ENCODE measurements at regions of chr11 and their contacts with region 1.

Region 1: GRCh38 chr11:119121008-119121810 is at the start of gene HINFP:
- DNase-seq: peak; percentile 99 to 100 (median 100)

Region 2: DNA sequence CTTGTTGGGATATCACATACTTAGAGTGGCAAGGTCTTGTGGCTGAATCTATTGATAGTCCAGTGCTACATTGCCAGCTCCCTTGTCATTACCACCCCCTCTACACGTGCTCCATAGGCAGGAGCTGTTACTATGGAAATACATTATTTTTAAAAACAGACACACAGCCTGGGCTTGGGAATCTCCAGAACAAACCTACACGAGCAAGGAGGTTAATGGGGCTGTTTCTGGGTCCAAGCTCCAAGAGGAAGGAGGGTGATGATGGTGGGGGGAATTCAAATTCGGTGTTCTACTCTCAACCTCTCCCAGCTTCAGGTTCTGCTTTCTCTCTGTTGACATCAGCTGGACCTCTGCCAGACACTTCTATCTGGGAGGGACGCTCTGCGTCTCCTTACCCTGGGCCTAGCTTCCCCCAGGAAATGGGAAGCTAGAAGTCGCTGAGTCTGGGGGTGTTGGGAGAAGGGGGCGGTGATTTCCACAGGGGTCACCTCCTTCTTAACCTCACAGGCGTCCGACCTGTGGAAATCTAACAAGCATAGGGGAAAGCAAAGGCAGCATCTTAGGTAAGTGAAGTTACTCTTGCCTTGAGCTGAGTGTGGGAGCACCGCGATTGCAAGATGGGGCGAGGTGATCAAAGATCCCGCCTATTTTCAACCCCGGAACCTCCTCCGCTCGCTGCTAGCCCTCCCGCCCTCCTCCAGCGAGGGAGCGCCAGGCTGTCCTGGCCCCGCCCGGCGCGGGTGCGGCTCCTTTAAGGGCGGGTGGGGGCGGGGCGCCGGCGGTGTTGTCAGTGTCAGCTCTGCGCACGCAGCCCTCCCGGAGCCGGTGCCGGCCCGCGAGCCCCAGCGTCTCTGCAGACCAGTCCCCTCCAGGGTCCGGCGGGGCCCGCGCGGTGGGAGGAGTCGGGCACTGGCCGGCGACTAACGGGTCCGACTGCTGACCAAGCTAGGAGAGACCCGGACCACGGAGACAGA is 14.4 kb before region 1 on chr11 and contains the start of gene C2CD2L:
- intact Hi-C with region 1: loop called (anchors 2 kb)
- DNase-seq: peak; percentile 73 to 98 (median 86)

Measured in posterior cingulate gyrus (tissue), 11 donors.